ENCODE measurements at regions of chr2 and their contacts with region 1.

Region 1: DNA sequence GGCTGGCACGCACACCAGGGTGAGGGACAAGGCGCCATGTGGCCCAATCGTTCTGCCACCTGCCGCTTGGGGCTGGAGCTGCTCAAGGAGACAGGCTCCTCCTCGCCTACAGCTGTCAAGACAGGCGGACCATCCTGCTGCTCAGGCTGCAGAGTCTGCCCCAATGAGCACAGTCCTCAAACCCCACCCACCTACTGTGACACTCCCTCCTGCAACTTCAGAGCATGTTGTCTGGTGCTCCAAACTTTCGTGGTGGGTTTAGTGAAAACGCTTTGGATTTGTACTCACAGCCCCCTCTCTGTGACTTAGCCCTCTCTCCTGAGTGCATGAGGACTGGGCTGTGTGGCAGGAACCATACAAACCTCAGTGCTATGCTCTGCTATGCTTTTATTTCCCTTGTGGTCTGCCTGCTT is 23.2 kb upstream of the SLC35F6 start:
- DNase-seq: peak in 1 of 2 donors; percentile 67
- H3K4me3 ChIP-seq: no peak overlapping the region
- H3K27ac ChIP-seq: no peak overlapping the region
- H3K4me1 ChIP-seq: peaks cover 0 to 11% (median 4%) of the 10 kb centered on the region in 4 donors
- H3K27me3 ChIP-seq: peaks cover 0 to 9% (median 0%) of the 10 kb centered on the region in 3 donors
- CTCF ChIP-seq: no peak
- EP300 ChIP-seq: no peak
- POLR2A ChIP-seq: no peak

Region 2: DNA sequence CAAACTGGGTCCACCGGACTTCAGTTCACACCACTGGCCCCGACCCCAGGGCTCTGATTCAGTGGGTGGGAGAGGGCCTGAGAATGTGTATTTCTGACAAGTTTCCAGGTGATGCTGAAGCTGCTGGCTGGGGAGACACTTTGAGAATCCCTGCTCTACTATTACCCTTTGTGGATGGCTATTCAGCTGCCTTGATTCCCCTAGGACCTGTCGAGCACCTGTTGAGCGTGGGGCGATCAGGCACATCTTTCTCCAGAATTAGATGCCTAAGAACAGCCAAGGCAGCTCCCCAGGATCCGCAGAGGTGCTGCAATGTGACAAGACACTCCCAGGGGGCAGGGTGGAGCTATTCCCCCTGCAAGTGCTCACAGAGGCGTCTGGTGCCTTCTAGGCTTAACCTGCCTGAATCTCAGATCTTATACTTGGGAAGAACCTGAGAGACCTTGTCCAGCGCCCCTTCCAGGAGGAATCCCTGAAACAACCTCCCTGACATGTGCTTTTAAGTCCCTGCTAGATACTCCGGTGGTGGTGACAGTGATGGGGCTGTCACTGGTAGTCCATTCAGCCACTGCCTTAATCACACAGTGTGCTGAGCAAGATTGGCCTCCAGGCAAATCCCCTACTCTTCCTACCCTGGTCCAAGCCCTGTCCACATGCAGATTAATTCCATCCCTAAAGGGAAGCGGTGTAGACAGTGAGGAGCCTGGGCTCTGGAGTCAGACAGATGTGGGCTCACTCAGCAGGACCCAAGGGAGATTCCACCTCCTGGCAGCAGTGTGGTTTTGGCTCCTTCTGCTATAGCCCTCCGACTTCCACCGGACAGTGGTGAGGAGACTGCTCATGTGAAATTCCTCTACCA is 219.6 kb before region 1 on chr2:
- intact Hi-C with region 1: no loop called
- DNase-seq: peak; percentile 46 to 54
- H3K4me3 ChIP-seq: no peak overlapping the region
- H3K27ac ChIP-seq: no peak overlapping the region
- H3K4me1 ChIP-seq: no peaks in the 10 kb centered on the region
- H3K27me3 ChIP-seq: peaks cover 0 to 48% (median 0%) of the 10 kb centered on the region in 3 donors
- CTCF ChIP-seq: peak in 4 of 7 experiments; percentile 12 to 37 (median 28)
- EP300 ChIP-seq: no peak
- POLR2A ChIP-seq: no peak

Region 3: DNA sequence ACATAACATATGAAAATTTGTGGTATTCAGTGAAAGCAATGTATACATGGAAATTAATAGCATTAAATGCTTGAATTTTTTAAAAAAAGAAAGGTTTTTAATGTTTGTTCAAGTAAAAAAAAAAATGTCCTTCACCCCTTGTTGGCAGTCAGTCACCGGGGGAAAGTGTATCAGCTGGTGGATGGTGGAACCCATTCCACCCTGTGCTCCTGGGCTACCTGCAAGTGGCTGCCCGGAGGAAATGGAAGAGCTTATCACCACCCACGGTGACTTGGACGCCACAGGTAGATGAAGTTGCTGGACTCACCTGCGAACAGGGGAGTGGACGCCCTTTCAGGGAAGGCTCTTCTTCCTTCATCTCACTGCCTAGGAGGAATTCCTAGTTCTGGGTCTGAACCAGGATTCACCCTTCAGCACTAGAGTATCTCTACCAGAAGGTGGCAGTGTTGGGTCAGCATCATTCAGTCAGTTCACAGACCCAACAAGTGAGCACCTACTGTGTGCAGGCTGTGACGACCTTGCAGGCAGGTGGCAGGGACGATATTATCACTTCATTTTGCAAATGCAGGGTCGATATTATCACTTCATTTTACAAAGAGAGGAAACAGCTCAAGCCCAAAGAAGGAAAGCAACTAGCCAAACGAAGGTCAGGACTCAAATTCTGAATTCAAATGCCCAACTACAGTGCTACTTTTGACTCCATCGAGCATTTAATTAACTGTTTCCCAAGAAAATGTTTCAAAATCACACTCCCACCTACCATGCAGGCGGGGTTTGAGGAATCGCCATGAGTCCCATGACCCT is 135.5 kb before region 1 on chr2:
- intact Hi-C with region 1: loop called (anchors 5 kb)
- DNase-seq: peak in 1 of 2 donors; percentile 84
- H3K4me3 ChIP-seq: no peak overlapping the region
- H3K27ac ChIP-seq: no peak overlapping the region
- H3K4me1 ChIP-seq: peaks cover 7 to 27% (median 14%) of the 10 kb centered on the region in 4 donors
- H3K27me3 ChIP-seq: peaks cover 0 to 32% (median 0%) of the 10 kb centered on the region in 3 donors
- CTCF ChIP-seq: peak in 5 of 7 experiments; percentile 67 to 91 (median 80)
- EP300 ChIP-seq: no peak
- POLR2A ChIP-seq: no peak